ENCODE measurements at regions of chr20 and their contacts with region 1.

Region 1: GRCh38 chr20:1503564-1504227 is 12.5 kb upstream of the SIRPB2 start:
- ATAC-seq: peak; percentile 72 to 100 (median 82)
- H3K4me3 ChIP-seq: no peak overlapping the region
- H3K27ac ChIP-seq: no peak overlapping the region
- H3K4me1 ChIP-seq: no peaks in the 10 kb centered on the region

Region 2: DNA sequence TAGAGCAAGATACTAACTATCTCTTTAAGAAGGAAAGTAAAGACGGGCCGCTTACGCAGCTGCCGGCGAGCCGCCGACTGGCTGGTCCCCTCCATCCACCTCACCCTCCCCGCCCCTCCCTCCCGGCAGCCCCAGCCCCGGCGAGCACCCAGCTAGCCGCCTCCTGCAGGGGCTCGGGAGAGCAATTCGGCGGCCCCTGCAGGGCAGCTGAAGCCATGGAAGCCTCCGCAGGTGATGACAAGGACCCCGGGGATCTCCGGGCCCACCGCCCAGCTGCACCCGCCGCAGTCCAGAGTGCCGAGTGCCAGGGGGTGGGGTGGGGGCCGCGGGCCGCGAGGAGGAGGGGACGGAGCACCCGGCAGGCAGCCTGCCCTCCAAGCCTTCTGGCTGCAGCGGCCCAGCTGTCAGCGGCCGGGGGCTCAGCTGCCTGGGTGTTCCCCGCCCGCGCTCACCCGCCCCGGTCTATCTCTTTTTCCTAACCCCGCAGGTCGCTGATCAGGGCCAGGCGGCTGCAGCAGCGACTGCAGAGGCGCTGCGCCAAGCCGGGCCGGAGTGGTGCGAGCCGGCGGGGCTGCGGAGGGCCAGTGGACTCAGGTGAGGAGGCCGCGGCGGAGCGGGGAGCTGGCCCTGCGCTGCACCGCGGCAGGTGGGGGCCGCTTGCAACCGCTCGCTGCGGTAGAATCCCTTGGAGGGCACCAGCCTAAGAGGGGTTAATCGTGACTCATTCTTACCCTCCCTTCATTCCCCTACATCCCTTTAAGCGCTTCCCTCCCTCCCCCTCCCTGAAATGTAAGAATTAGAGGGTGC is 237.3 kb before region 1 on chr20 and contains the start of gene SNPH:
- in situ Hi-C with region 1: no loop called
- ATAC-seq: peak; percentile 85 to 94 (median 87)
- H3K4me3 ChIP-seq: peak within 1 kb of the TSS; percentile 51 to 86 (median 65)
- H3K27ac ChIP-seq: peak within 1 kb of the TSS; percentile 51 to 75
- H3K4me1 ChIP-seq: peaks cover 4 to 7% of the 10 kb centered on the region in 2 donors
- total RNA-seq, gene SNPH: 4.0 to 14.6 (median 7.0) TPM

Region 3: GRCh38 chr20:1764136-1765033 is 260.7 kb after region 1 on chr20:
- in situ Hi-C with region 1: loop called in 1 of 9 experiments (anchors 25 kb)
- ATAC-seq: peak; percentile 94 to 99 (median 98)
- H3K4me3 ChIP-seq: no peak overlapping the region
- H3K27ac ChIP-seq: no peak overlapping the region
- H3K4me1 ChIP-seq: no peaks in the 10 kb centered on the region

Measured in motor neuron (in vitro differentiated cells).